Left ventricle myocardium inferior (tissue), 1 donor: ENCODE measurements at regions of chr3 and their contacts with region 1.

Region 1: GRCh38 chr3:111967651-111968274 is 11.1 kb upstream of the ABHD10 start:
- DNase-seq: peak; percentile 76
- H3K4me3 ChIP-seq: no peak overlapping the region
- H3K27ac ChIP-seq: peak overlapping the region; percentile 71
- H3K4me1 ChIP-seq: peaks cover 65% of the 10 kb centered on the region
- H3K27me3 ChIP-seq: no peaks in the 10 kb centered on the region
- CTCF ChIP-seq: peak; percentile 91

Region 2: DNA sequence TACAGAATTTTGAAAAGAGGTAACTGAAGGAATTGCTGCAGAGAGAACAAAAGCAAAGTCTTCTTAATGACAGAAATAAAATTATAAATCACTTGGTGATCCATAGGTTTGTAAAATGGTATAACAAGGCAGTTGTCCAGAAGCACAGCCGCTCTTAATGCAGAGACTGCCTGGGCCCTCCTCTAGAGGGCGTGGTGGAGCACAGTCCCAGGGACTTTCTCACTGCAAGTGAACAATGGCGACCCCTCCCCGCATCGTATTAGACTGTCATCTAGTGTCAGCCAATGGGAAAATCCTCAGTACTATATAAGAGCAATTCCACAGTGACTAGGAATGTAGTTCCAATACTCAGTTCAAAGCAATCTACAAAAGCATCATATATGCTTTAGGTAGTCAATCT is 346.2 kb before region 1 on chr3:
- intact Hi-C with region 1: no loop called
- DNase-seq: no peak
- H3K4me3 ChIP-seq: no peak overlapping the region
- H3K27ac ChIP-seq: no peak overlapping the region
- H3K4me1 ChIP-seq: peaks cover 8% of the 10 kb centered on the region
- H3K27me3 ChIP-seq: peaks cover 4% of the 10 kb centered on the region
- CTCF ChIP-seq: no peak

Region 3: DNA sequence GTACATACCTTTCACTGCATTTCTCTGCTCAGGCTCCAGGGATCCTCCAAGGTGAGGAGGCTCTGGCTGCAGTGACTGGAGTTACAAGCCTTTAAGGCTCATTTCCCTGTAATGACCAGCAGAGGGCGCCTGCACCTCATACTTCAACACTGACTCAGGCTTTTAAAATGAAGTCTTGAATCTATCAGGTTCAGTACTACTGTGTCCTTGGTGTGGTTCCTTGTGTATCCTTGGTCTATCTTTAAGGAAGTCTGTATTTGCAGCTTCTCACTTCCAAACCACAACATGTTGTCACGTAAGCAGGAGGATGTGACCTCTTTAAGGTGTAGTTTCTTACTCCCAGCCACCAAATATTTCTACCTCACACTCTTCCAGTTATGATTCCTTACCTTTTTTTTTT is 250.2 kb before region 1 on chr3:
- intact Hi-C with region 1: loop called (anchors 2 kb)
- DNase-seq: peak; percentile 60
- H3K4me3 ChIP-seq: no peak overlapping the region
- H3K27ac ChIP-seq: peak overlapping the region; percentile 67
- H3K4me1 ChIP-seq: peaks cover 49% of the 10 kb centered on the region
- H3K27me3 ChIP-seq: no peaks in the 10 kb centered on the region
- CTCF ChIP-seq: peak; percentile 98

Region 4: GRCh38 chr3:111737706-111738086 is 230.1 kb before region 1 on chr3:
- intact Hi-C with region 1: loop called (anchors 5 kb)
- DNase-seq: peak; percentile 31
- H3K4me3 ChIP-seq: no peak overlapping the region
- H3K27ac ChIP-seq: peak overlapping the region; percentile 92
- H3K4me1 ChIP-seq: peaks cover 70% of the 10 kb centered on the region
- H3K27me3 ChIP-seq: no peaks in the 10 kb centered on the region
- CTCF ChIP-seq: no peak